Caco-2 (cell line): ENCODE measurements at regions of chr2 and their contacts with region 1.

Region 1: DNA sequence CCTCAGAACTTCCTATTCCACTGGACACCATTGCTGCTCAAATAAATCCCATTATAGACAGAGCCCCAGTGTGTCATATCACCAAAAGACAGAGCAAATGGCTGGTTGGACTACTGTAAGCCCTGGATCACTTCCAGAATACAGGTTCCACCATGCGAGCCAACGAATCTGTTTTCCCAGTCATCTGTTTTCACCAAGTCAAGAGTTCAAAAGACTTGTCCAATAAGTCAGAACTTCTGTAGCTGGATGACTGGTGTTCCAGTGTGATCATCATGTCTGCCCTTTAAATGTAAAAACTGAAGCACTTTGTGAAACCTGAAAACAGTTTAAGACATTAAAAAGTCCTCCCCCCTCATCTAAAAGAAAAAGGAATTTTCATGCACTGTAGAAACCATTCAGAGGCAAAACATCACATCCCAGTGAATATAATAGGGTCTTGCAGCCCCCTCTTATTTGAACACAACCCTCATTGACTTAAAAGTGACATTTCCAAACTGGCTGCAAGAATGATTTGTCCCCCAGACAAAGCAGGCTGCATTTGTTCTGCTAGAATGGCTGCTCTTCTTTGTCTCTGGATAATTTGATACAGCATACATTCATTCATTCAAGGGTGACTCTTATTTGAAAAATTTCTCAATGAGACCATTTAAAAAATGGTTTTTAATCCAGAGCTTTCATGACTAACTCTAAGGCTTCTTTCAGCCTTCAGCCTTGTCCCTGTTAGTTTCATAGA is 64.6 kb upstream of the TANC1 start:
- DNase-seq: no peak
- H3K4me3 ChIP-seq: no peak overlapping the region
- H3K4me3 Mint-ChIP-seq: no peak overlapping the region
- H3K27ac Mint-ChIP-seq: no peak overlapping the region
- H3K4me1 ChIP-seq: no peaks in the 10 kb centered on the region
- H3K4me1 Mint-ChIP-seq: no peaks in the 10 kb centered on the region
- H3K27me3 ChIP-seq: no peaks in the 10 kb centered on the region
- H3K27me3 Mint-ChIP-seq: no peaks in the 10 kb centered on the region
- CTCF ChIP-seq: no peak

Region 2: GRCh38 chr2:158845859-158846258 is 58.0 kb before region 1 on chr2:
- CTCF ChIA-PET with region 1: no interaction called
- POLR2A ChIA-PET with region 1: no interaction called
- intact Hi-C with region 1: loop called (anchors 2 kb)
- DNase-seq: no peak
- H3K4me3 ChIP-seq: no peak overlapping the region
- H3K4me3 Mint-ChIP-seq: no peak overlapping the region
- H3K27ac Mint-ChIP-seq: no peak overlapping the region
- H3K4me1 ChIP-seq: peaks cover 14% of the 10 kb centered on the region
- H3K4me1 Mint-ChIP-seq: peaks cover 27% of the 10 kb centered on the region
- H3K27me3 ChIP-seq: no peaks in the 10 kb centered on the region
- H3K27me3 Mint-ChIP-seq: no peaks in the 10 kb centered on the region
- CTCF ChIP-seq: no peak

Region 3: DNA sequence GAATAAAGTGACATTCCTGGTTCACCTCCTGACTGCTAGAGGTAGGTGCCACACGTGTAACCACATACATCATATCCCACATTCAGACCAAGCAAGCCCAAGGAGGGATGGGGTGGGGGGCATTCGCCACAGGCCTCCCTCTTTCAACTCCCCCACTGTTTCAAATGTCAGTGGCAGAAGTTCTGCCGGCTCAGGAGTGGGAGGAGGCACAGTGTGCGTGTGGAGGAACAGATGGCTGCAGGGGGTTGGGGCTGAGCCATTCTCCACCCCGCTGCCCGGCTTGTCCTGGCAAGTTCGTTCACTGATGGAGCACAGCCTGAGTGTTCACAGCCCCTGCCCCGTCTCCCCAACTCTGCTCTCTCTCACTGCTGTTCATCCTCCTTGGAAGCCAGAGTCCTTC is 10.9 kb before region 1 on chr2:
- CTCF ChIA-PET with region 1: no interaction called
- POLR2A ChIA-PET with region 1: no interaction called
- intact Hi-C with region 1: no loop called
- DNase-seq: no peak
- H3K4me3 ChIP-seq: no peak overlapping the region
- H3K4me3 Mint-ChIP-seq: no peak overlapping the region
- H3K27ac Mint-ChIP-seq: no peak overlapping the region
- H3K4me1 ChIP-seq: peaks cover 24% of the 10 kb centered on the region
- H3K4me1 Mint-ChIP-seq: peaks cover 20% of the 10 kb centered on the region
- H3K27me3 ChIP-seq: no peaks in the 10 kb centered on the region
- H3K27me3 Mint-ChIP-seq: no peaks in the 10 kb centered on the region
- CTCF ChIP-seq: no peak

Region 4: DNA sequence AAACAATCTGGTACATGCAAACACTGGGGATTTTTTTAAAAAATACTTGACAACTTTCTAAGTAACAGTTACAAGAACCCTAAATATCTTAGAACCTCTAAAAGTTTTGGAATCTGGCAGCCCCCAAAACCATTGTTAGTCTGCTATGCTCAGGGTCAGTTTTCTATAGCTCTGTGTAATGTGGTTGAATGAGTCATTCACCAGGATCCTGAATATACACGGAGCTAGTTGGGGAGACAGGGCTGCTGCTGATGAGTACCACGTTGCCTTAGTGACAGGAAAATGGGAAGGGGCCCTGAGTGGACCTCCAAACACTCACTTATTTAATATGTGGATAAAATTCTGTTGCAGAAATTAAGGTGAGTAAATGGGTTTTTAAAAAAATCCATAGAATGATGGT is 27.7 kb after region 1 on chr2:
- CTCF ChIA-PET with region 1: no interaction called
- POLR2A ChIA-PET with region 1: no interaction called
- intact Hi-C with region 1: no loop called
- DNase-seq: no peak
- H3K4me3 ChIP-seq: no peak overlapping the region
- H3K4me3 Mint-ChIP-seq: no peak overlapping the region
- H3K27ac Mint-ChIP-seq: no peak overlapping the region
- H3K4me1 ChIP-seq: peaks cover 11% of the 10 kb centered on the region; the same call in 1 of the 2 replicates
- H3K4me1 Mint-ChIP-seq: peaks cover 16% of the 10 kb centered on the region
- H3K27me3 ChIP-seq: no peaks in the 10 kb centered on the region
- H3K27me3 Mint-ChIP-seq: no peaks in the 10 kb centered on the region
- CTCF ChIP-seq: no peak

Region 5: DNA sequence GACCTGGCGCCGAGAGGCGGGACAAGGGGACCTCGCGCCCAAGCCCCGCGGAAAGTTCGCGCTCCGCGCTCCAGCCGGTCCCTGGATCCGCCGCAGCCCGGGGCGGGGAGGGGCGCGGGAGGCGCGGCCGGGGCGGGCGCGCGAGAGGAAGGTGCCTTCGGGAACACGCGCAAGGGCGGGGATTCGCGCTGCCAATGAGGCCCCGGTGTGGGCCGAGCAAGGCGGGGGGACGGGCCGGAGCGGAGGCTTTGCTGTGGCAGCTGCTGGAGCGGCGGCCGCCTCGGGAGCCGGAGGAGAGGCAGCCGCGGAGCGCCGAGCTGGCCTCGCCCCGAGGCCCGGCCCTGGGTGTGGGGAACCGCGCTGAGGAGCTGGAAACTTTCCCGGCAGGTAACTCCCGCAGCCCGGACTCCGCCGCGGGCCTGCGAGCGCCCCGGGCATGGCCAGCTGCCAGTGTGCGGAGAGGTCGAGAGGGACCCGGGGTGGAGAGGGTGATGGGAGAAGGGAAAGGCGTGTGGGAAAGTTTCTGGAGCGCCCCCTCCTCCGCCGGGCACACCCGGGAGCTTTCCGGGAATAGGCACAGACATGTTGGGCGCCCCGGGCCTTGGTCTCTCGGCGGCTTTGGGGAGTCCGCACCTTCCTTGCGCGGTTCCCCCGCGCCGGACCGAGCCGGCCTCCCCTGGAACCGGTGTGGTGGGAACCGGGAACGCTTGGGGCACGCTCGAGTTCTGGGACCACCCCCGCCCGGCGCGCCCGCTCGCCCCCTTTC is 64.7 kb after region 1 on chr2 and contains the start of gene TANC1:
- CTCF ChIA-PET with region 1: no interaction called
- POLR2A ChIA-PET with region 1: no interaction called
- intact Hi-C with region 1: loop called (anchors 2 kb)
- DNase-seq: peak; percentile 96 to 98
- H3K4me3 ChIP-seq: peak within 1 kb of the TSS; percentile 90
- H3K4me3 Mint-ChIP-seq: peak within 1 kb of the TSS; percentile 98
- H3K27ac Mint-ChIP-seq: peak within 1 kb of the TSS; percentile 84
- H3K4me1 ChIP-seq: peaks cover 16% of the 10 kb centered on the region; the same call in 1 of the 2 replicates
- H3K4me1 Mint-ChIP-seq: peaks cover 17% of the 10 kb centered on the region
- H3K27me3 ChIP-seq: no peaks in the 10 kb centered on the region
- H3K27me3 Mint-ChIP-seq: no peaks in the 10 kb centered on the region
- CTCF ChIP-seq: no peak
- total RNA-seq, gene TANC1: 21.1 and 23.0 TPM in 2 replicates

Region 6: DNA sequence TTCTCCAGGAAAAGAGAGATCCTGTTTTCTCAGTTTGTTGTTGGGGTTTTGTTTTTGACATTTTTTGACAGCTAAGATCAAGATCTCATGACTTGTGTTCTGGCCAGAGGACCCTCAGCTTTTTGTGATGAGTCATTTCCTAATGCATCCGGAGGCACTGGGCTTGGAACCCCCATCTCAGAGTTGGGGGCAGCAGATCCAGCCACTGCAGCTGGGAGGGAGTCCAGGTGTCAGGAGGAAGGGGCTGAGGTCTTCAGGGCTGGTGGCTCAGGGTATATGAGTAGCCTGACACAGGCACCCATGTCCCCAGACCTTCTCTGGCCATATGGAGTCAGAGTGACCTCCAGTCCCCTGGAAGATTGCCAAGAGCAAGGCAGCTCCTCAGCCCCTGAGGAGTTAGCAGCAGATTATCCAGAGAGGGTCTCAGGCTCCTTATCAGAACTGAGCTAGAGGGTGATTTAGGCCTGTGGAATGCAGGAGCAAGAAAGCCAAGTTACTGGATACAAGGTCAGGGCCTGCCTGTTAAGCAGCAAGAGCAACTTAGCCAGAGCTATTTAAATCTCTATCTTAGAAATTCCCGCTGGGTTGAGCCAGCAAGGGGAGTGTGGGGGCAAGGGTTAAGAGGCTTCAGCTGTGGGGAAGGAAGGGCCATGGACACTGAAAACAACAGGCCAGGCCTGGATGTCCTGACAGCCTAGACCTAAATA is 127.0 kb after region 1 on chr2:
- CTCF ChIA-PET with region 1: interaction called, 3 read pairs
- POLR2A ChIA-PET with region 1: no interaction called
- intact Hi-C with region 1: loop called (anchors 1 kb)
- DNase-seq: peak; percentile 63 to 85
- H3K4me3 ChIP-seq: no peak overlapping the region
- H3K4me3 Mint-ChIP-seq: peak overlapping the region; percentile 42
- H3K27ac Mint-ChIP-seq: peak overlapping the region; percentile 91
- H3K4me1 ChIP-seq: peaks cover 44% of the 10 kb centered on the region
- H3K4me1 Mint-ChIP-seq: peaks cover 55% of the 10 kb centered on the region
- H3K27me3 ChIP-seq: no peaks in the 10 kb centered on the region
- H3K27me3 Mint-ChIP-seq: no peaks in the 10 kb centered on the region
- CTCF ChIP-seq: no peak

Region 7: DNA sequence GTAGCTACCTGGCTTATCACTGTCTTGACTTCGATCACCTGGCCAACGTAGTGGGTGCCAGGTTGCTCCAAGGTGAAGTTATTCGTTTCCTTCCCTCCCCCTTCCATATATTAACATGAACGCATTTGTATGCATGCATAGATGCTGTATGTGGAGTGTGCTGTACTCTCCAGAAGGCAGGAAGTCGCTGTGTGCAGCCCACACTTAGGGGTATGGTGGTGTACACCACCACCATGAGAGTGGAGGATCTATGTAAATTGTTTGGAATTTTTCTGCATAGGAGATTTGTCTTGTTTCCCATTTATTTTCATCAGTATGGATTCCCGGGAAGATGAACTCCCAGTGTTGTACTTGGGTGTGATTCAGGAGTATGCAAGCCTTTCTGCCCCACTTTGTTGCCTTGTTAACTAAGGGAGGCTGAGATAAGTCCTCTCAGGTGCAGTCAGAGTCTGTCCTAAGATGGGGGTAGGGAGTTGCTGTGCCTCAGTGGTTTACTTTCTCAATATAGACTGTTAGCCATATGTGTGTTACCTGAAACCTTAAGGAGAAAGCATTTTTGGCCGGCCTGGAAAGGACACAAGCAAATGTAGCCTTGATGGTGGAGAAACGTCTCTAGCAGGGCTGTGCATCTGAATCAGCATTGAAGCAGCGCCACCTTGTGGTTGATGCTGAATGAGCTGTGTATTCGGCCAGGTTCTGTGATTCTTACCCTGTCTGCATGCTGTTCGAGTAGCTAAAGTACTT is 214.4 kb after region 1 on chr2:
- CTCF ChIA-PET with region 1: interaction called, 8 read pairs
- POLR2A ChIA-PET with region 1: no interaction called
- intact Hi-C with region 1: loop called (anchors 1 kb)
- DNase-seq: peak; percentile 83 to 87
- H3K4me3 ChIP-seq: no peak overlapping the region
- H3K4me3 Mint-ChIP-seq: no peak overlapping the region
- H3K27ac Mint-ChIP-seq: no peak overlapping the region
- H3K4me1 ChIP-seq: peaks cover 28% of the 10 kb centered on the region
- H3K4me1 Mint-ChIP-seq: peaks cover 26% of the 10 kb centered on the region
- H3K27me3 ChIP-seq: no peaks in the 10 kb centered on the region
- H3K27me3 Mint-ChIP-seq: no peaks in the 10 kb centered on the region
- CTCF ChIP-seq: peak; percentile 82 to 91

Region 8: DNA sequence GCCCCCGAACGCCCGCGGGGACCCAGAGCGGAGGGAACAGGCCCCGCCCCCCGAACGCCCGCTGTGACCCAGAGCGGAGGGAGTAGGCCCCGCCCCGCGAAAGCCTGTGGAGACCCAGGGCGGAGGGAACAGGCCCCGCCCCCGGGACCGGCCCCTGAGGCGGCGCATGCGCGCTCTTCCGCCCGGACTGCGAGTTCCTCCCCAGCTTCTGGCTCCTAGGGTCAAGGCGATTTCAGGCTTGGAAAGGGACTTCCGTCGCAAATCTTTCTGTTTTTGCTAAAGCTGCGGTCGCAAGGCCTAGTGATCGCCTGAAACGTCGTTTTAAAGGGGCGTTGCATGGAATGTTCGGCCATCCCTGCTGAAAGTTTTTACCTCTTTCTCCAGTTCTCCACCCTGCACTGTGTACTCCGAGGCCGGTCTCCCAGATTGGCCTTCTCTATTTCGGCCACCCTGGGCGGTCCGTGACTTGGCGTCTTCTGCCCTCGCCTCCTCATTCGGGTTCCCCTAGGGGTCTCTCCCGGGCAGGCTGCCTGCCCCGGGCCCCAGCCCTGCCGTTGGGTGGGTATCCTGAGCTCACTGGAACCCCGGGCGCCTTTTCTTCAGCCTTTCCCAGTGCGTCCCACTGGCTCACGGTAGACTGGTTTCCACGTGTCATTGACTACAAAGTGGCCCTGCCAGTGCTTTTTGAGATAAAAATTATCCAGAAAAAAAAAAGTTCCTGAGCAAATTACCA is 383.0 kb after region 1 on chr2:
- CTCF ChIA-PET with region 1: no interaction called
- POLR2A ChIA-PET with region 1: no interaction called
- intact Hi-C with region 1: loop called (anchors 10 kb)
- DNase-seq: peak; percentile 99 to 100
- H3K4me3 ChIP-seq: peak overlapping the region; percentile 50
- H3K4me3 Mint-ChIP-seq: peak overlapping the region; percentile 89
- H3K27ac Mint-ChIP-seq: peak overlapping the region; percentile 78
- H3K4me1 ChIP-seq: peaks cover 13% of the 10 kb centered on the region
- H3K4me1 Mint-ChIP-seq: peaks cover 22% of the 10 kb centered on the region
- H3K27me3 ChIP-seq: no peaks in the 10 kb centered on the region
- H3K27me3 Mint-ChIP-seq: no peaks in the 10 kb centered on the region
- CTCF ChIP-seq: peak in 1 of 2 experiments; percentile 18